Left cardiac atrium (tissue), 4 donors: ENCODE measurements at regions of chr7 and their contacts with region 1.

Region 1: GRCh38 chr7:80699045-80699638 is 60.7 kb downstream of the CD36 start:
- DNase-seq: no peak
- ATAC-seq: peak; percentile 70 to 77

Region 2: GRCh38 chr7:80922196-80922595 is 223.1 kb after region 1 on chr7:
- intact Hi-C with region 1: loop called in 1 of 2 experiments (anchors 5 kb)
- DNase-seq: no peak
- ATAC-seq: no peak

Region 3: DNA sequence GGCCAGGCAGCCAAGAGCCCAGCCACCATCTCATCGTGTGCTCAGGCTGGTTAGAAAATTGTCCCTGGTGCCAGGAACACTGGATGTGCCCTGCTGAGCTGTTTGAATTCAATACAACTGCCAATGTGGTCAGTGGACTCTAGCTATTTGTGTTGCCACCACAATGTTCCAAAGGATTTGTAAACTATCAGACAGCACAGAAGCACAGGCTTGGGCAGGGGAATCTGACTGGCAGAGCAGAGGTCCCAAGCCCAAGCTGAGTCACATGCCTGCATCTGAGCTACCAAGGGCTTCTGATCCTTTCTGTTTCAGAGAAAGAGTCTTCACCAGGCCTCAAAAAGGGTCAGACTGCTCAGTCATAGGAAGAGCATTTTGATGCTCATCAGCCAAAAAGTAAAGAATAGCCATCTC is 451.8 kb after region 1 on chr7:
- intact Hi-C with region 1: loop called in 1 of 2 experiments (anchors 5 kb)
- DNase-seq: peak; percentile 26
- ATAC-seq: peak; percentile 61 to 85

Region 4: GRCh38 chr7:81256991-81257390 is 557.8 kb after region 1 on chr7:
- intact Hi-C with region 1: loop called (anchors 2 to 10 kb)
- DNase-seq: no peak
- ATAC-seq: peak; percentile 59 to 61

Region 5: GRCh38 chr7:81457852-81458522 is 758.8 kb after region 1 on chr7:
- intact Hi-C with region 1: loop called (anchors 5 to 10 kb)
- DNase-seq: no peak
- ATAC-seq: no peak

Region 6: GRCh38 chr7:81469869-81470723 is 771.0 kb after region 1 on chr7:
- intact Hi-C with region 1: loop called in 1 of 2 experiments (anchors 5 kb)
- DNase-seq: peak; percentile 74
- ATAC-seq: peak; percentile 89 to 90